Heart left ventricle (tissue), 16 donors: ENCODE measurements at regions of chr7 and their contacts with region 1.

Region 1: DNA sequence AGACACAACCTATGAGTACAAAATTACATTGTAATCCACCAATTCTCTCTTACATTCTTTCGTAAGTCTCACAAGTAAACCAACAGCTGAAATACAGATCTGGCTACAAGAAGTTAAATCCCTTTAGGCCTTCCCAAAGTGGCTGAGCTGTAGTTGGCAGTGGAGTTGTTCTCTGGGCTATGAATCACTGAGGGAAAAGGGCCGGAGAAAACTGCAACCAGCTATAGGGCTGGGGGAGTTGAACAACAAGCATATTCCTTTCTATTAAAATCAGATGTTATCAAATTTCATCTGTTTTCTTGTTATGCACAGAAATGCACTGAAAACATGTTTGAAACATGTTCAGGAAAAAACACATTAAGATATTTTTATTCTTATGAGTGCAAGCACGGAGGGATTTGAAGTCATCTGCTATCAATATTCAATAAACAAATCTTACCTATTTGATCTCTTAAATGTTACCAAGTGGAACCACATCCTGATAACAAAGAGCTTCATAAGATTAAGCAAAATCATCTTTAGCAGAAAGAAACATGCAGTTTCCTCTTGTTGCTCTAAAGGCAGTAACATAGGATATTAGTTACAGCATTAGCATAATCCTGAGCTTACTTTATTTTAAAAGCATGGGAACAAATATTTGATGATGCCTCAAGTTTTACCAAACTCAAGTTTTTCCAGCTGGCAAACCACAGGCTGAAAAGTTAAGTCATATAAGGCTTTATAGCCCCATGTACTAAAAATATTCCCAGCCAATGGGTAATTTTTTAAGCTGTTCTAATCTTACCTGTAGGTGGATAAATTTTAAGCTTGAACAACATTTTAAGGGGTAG is 212.7 kb downstream of the TAX1BP1 start:
- DNase-seq: no peak
- ATAC-seq: peak in 2 of 4 donors; percentile 21 to 38
- H3K4me3 ChIP-seq: no peak overlapping the region
- H3K27ac ChIP-seq: no peak overlapping the region
- H3K4me1 ChIP-seq: peaks cover 0 to 36% (median 5%) of the 10 kb centered on the region in 12 donors
- H3K27me3 ChIP-seq: no peaks in the 10 kb centered on the region
- CTCF ChIP-seq: no peak
- POLR2A ChIP-seq: no peak

Region 2: GRCh38 chr7:27921081-27921836 is 31.4 kb before region 1 on chr7:
- intact Hi-C with region 1: no loop called
- DNase-seq: peak in 2 of 5 donors; percentile 20 to 27
- ATAC-seq: peak in 3 of 4 donors; percentile 47 to 73 (median 59)
- H3K4me3 ChIP-seq: no peak overlapping the region
- H3K27ac ChIP-seq: no peak overlapping the region
- H3K4me1 ChIP-seq: peaks cover 0 to 31% (median 10%) of the 10 kb centered on the region in 12 donors
- H3K27me3 ChIP-seq: no peaks in the 10 kb centered on the region
- CTCF ChIP-seq: peak; percentile 32 to 68 (median 59)
- POLR2A ChIP-seq: no peak

Region 3: DNA sequence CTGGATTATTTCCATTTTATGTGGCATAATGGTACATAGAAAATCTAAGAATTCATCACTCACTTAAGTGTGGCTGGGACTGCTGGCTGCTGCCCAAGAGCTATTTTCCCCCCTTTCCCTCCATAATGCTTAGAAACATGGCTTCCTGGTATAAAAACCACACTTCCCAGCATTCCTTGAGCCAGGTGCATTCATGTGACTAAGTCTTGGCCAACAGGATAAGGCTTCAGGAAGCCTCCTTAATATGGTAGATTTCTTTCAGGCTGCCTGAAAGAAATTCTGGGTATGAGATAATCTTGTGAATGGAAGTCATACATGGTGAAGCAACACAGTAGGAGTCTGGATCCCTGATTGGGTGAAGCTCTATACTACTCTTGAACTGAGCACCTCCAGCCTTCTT is 50.0 kb after region 1 on chr7:
- intact Hi-C with region 1: loop called in 3 of 10 experiments (anchors 5 to 10 kb)
- DNase-seq: no peak
- ATAC-seq: no peak
- H3K4me3 ChIP-seq: no peak overlapping the region
- H3K27ac ChIP-seq: no peak overlapping the region
- H3K4me1 ChIP-seq: peaks cover 0 to 22% (median 12%) of the 10 kb centered on the region in 12 donors
- H3K27me3 ChIP-seq: no peaks in the 10 kb centered on the region
- CTCF ChIP-seq: no peak
- POLR2A ChIP-seq: no peak

Region 4: DNA sequence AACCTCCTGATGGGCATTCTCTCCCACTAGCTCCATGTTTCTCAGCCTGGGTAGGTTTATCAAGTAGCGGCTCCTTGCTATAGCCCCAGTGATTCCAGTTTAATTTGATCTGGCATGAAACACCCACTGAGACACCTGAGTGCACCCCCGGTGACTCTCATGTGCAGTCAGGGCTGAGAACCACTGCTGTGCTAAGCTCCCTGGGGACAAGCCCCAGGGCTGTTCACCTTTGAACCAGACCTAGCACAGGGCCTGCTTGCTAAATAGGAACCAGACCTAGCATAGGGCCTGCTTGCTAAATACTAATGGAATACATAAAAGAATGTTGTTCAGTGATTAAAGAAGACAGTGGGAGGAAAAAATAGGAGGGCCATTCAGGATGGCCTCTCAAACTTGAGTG is 60.3 kb after region 1 on chr7:
- intact Hi-C with region 1: loop called in 4 of 10 experiments (anchors 5 to 10 kb)
- DNase-seq: no peak
- ATAC-seq: no peak
- H3K4me3 ChIP-seq: no peak overlapping the region
- H3K27ac ChIP-seq: no peak overlapping the region
- H3K4me1 ChIP-seq: peaks cover 0 to 47% (median 7%) of the 10 kb centered on the region in 12 donors
- H3K27me3 ChIP-seq: no peaks in the 10 kb centered on the region
- CTCF ChIP-seq: no peak
- POLR2A ChIP-seq: no peak